ENCODE measurements at regions of chr9 and their contacts with region 1.

Region 1: GRCh38 chr9:75071530-75072124 is 16.3 kb downstream of the NMRK1 start:
- DNase-seq: no peak
- H3K4me3 ChIP-seq: no peak overlapping the region
- H3K27ac ChIP-seq: no peak overlapping the region
- H3K4me1 ChIP-seq: no peaks in the 10 kb centered on the region
- H3K27me3 ChIP-seq: no peaks in the 10 kb centered on the region
- CTCF ChIP-seq: no peak

Region 2: GRCh38 chr9:74865177-74865576 is 206.4 kb before region 1 on chr9:
- intact Hi-C with region 1: no loop called
- DNase-seq: no peak
- H3K4me3 ChIP-seq: no peak overlapping the region
- H3K27ac ChIP-seq: no peak overlapping the region
- H3K4me1 ChIP-seq: no peaks in the 10 kb centered on the region
- H3K27me3 ChIP-seq: no peaks in the 10 kb centered on the region
- CTCF ChIP-seq: no peak

Region 3: DNA sequence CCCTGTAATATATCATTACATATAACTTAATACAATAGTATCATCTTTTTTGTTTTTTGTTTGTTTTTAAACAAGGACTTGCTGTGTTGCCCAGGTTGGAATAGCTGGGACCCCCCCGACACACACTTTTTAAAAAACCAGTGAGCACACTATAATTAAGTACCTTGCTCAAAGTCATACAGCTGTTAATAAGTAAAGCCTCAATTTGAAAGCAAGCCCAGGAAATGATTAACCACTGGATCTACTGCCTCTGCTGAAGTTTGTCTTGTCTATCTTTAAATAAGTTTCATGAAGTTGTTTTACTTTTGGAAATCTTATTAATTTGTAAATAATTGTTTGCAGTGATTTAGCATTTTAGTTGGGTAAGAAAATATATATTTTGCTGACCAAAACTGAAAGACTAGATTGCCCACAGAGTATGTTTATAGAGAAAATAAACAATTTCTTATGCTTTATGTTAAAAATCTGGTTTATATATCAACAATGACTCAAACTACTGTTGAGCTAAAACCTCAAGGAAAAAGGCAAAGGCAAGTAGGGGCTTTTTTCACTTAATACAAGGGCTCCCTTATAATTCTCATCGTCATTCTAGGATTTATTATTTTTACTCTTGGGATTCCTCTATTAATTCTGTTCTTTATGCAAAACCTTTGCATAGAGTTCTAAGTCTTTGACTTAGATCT is 37.7 kb before region 1 on chr9:
- intact Hi-C with region 1: loop called (anchors 2 kb)
- DNase-seq: no peak
- H3K4me3 ChIP-seq: no peak overlapping the region
- H3K27ac ChIP-seq: no peak overlapping the region
- H3K4me1 ChIP-seq: no peaks in the 10 kb centered on the region
- H3K27me3 ChIP-seq: peaks cover 0 to 2% of the 10 kb centered on the region in 2 donors
- CTCF ChIP-seq: no peak